Dendritic cell treated with granulocyte-macrophage colony-stimulating factor and Interleukin-4, amounts not matched to agents 40 ng/mL and 50 ng/mL, for 4 days (primary cell): ENCODE measurements at regions of chr3 and their contacts with region 1.

Region 1: DNA sequence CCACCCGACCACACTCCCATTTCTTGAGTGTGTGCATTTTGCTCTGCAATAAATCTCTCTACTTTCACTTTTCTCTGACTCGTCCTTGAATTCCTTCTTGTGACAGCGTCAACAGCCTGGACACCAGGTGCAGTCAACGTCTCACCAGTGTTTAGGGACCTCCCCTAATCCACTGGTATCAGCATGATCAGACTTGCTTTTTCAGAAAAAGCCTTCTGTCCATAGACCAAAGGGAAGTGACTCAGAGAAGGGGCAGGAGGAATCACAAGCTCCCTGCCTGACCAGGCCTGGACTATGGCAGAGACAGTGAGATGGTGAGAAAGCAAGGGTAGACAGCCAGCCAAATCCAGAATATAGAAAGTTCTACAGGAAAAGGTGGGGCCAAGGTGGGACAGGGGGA is 15.5 kb downstream of the CCR5 start:
- H3K4me3 Mint-ChIP-seq: no peak overlapping the region
- H3K27ac Mint-ChIP-seq: peak overlapping the region; percentile 42
- H3K4me1 Mint-ChIP-seq: peaks cover 35% of the 10 kb centered on the region
- H3K27me3 Mint-ChIP-seq: no peaks in the 10 kb centered on the region

Region 2: DNA sequence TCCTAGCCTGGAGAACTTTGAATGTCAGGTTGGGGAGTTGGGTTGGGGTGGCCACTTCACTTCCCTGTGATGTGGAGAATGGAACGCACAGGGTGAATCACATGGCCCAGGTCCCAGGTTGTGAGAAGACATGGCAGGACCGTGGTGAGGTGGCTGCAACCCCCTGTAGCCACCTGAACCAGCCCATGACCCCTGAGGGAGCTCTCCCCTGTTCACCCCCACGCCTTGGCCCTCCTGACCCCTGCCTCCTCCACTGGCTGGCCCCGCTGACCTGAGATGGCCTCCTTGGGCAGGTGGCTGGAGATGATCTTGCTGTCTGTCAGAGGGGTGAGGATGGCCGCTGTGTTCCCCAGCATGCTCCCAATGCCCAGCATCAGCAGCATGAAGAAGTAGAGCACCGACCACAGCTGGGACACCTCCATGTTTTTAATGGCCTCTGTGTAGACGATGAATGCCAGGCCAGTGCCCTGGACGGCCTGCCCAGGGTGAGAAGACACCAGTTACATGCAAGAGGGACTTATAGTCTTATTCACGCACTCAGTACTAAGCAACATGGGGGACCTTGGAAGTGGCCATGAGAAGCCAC is 620.8 kb before region 1 on chr3:
- intact Hi-C with region 1: no loop called
- H3K4me3 Mint-ChIP-seq: no peak overlapping the region
- H3K27ac Mint-ChIP-seq: no peak overlapping the region
- H3K4me1 Mint-ChIP-seq: peaks cover 5% of the 10 kb centered on the region
- H3K27me3 Mint-ChIP-seq: peaks cover 15% of the 10 kb centered on the region

Region 3: GRCh38 chr3:45776611-45777010 is 609.6 kb before region 1 on chr3:
- intact Hi-C with region 1: no loop called
- H3K4me3 Mint-ChIP-seq: no peak overlapping the region
- H3K27ac Mint-ChIP-seq: no peak overlapping the region
- H3K4me1 Mint-ChIP-seq: peaks cover 5% of the 10 kb centered on the region
- H3K27me3 Mint-ChIP-seq: peaks cover 8% of the 10 kb centered on the region

Region 4: GRCh38 chr3:46076606-46077005 is 309.6 kb before region 1 on chr3:
- intact Hi-C with region 1: no loop called
- H3K4me3 Mint-ChIP-seq: no peak overlapping the region
- H3K27ac Mint-ChIP-seq: no peak overlapping the region
- H3K4me1 Mint-ChIP-seq: peaks cover 38% of the 10 kb centered on the region
- H3K27me3 Mint-ChIP-seq: peaks cover 4% of the 10 kb centered on the region

Region 5: GRCh38 chr3:46442576-46443562 is 56.7 kb after region 1 on chr3:
- intact Hi-C with region 1: loop called (anchors 10 kb)
- H3K4me3 Mint-ChIP-seq: no peak overlapping the region
- H3K27ac Mint-ChIP-seq: no peak overlapping the region
- H3K4me1 Mint-ChIP-seq: peaks cover 31% of the 10 kb centered on the region
- H3K27me3 Mint-ChIP-seq: peaks cover 1% of the 10 kb centered on the region